Astrocyte of the cerebellum (primary cell): ENCODE measurements at regions of chr5 and their contacts with region 1.

Region 1: GRCh38 chr5:15203376-15203775 is 296.6 kb upstream of the FBXL7 start:
- DNase-seq: no peak
- H3K4me3 ChIP-seq: no peak overlapping the region
- CTCF ChIP-seq: no peak

Region 2: DNA sequence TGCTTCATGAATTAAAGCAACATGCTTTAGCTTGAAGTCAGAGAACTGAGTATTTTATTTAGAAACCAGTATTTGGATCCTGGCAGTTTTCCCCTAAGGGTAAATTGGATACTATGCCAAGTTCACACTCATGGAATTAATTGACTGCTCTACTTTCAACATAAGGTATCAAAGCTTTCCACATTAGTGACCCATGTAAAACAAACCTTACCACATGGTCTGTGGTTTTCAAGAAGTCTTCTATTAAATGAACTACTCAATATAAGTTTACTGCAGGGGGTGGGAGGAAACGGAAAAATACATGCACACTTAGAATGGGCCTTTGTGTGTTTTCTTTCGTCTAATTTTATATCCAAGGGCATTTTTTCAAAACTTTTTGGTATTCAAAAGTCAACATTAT is 64.6 kb after region 1 on chr5:
- in situ Hi-C with region 1: loop called (anchors 5 kb)
- DNase-seq: peak; percentile 26
- H3K4me3 ChIP-seq: no peak overlapping the region
- CTCF ChIP-seq: no peak

Region 3: GRCh38 chr5:15885156-15885555 is 681.8 kb after region 1 on chr5:
- in situ Hi-C with region 1: no loop called
- DNase-seq: peak; percentile 18
- H3K4me3 ChIP-seq: no peak overlapping the region
- CTCF ChIP-seq: no peak